Transverse colon (tissue), 4 donors: ENCODE measurements at regions of chr21 and their contacts with region 1.

Region 1: GRCh38 chr21:44454747-44455523 is at the start of gene LRRC3:
- DNase-seq: peak; percentile 90
- H3K4me3 ChIP-seq: peak within 1 kb of the TSS; percentile 86 to 99 (median 88)
- H3K27ac ChIP-seq: peak within 1 kb of the TSS; percentile 61 to 80 (median 78)
- H3K4me1 ChIP-seq: peaks cover 0 to 10% (median 7%) of the 10 kb centered on the region in 4 donors
- H3K27me3 ChIP-seq: peaks cover 8% of the 10 kb centered on the region
- CTCF ChIP-seq: no peak
- EP300 ChIP-seq: no peak
- POLR2A ChIP-seq: no peak
- total RNA-seq, gene LRRC3: 4.4 to 6.7 (median 5.1) TPM

Region 2: GRCh38 chr21:44267655-44268142 is 187.2 kb before region 1 on chr21:
- in situ Hi-C with region 1: loop called in 1 of 4 experiments (anchors 25 kb)
- intact Hi-C with region 1: no loop called
- DNase-seq: peak; percentile 32
- H3K4me3 ChIP-seq: no peak overlapping the region
- H3K27ac ChIP-seq: no peak overlapping the region
- H3K4me1 ChIP-seq: no peaks in the 10 kb centered on the region
- H3K27me3 ChIP-seq: no peaks in the 10 kb centered on the region
- CTCF ChIP-seq: peak in 2 of 5 experiments; percentile 12 to 25
- EP300 ChIP-seq: no peak
- POLR2A ChIP-seq: no peak

Region 3: GRCh38 chr21:44338971-44339910 is 115.7 kb before region 1 on chr21 and contains the start of gene CFAP410:
- in situ Hi-C with region 1: loop called in 1 of 4 experiments (anchors 10 kb)
- intact Hi-C with region 1: loop called (anchors 10 kb)
- DNase-seq: peak; percentile 95
- H3K4me3 ChIP-seq: peak within 1 kb of the TSS; percentile 33 to 66 (median 58)
- H3K27ac ChIP-seq: peak within 1 kb of the TSS; percentile 91 to 97 (median 95)
- H3K4me1 ChIP-seq: peaks cover 6 to 18% (median 14%) of the 10 kb centered on the region in 4 donors
- H3K27me3 ChIP-seq: no peaks in the 10 kb centered on the region
- CTCF ChIP-seq: peak in 1 of 5 experiments; percentile 24
- EP300 ChIP-seq: peak; percentile 35
- POLR2A ChIP-seq: peak; percentile 97
- total RNA-seq, gene CFAP410: 17.2 to 41.3 (median 32.2) TPM

Region 4: GRCh38 chr21:44347911-44348753 is 106.8 kb before region 1 on chr21:
- in situ Hi-C with region 1: loop called in 1 of 4 experiments (anchors 10 kb)
- intact Hi-C with region 1: no loop called
- DNase-seq: no peak
- H3K4me3 ChIP-seq: no peak overlapping the region
- H3K27ac ChIP-seq: no peak overlapping the region
- H3K4me1 ChIP-seq: no peaks in the 10 kb centered on the region
- H3K27me3 ChIP-seq: peaks cover 47% of the 10 kb centered on the region
- CTCF ChIP-seq: no peak
- EP300 ChIP-seq: no peak
- POLR2A ChIP-seq: no peak

Region 5: DNA sequence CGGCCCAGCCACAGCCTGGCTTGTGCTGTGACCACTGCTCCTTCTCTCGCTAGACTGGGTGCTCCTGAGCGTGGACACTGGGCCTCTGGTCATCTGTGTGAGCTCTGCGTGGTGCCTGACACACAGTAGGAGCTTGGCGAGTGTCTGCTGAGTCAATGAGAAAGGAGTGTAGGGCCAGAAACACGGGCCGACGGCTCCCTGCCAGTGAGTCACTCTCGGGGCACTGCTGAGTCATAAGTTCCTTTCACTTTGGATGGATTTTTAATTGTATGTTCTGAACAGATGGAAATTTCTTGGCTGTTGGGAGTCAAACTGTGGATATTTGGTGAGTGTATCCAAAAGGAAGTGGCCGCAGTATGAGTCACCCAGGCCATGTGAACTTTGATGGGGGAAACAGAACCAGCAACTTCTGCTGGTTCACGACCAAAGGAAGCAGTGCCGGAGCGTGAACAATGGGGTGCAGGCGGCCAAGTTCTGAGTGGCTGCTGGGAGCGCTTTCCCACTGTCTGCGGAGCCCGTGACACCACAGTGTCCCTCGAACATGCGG is 909.1 kb after region 1 on chr21:
- in situ Hi-C with region 1: no loop called
- intact Hi-C with region 1: no loop called
- DNase-seq: peak; percentile 66
- H3K4me3 ChIP-seq: no peak overlapping the region
- H3K27ac ChIP-seq: peak overlapping the region; percentile 87 to 90 (median 88)
- H3K4me1 ChIP-seq: peaks cover 4 to 21% (median 7%) of the 10 kb centered on the region in 4 donors
- H3K27me3 ChIP-seq: no peaks in the 10 kb centered on the region
- CTCF ChIP-seq: no peak
- EP300 ChIP-seq: no peak
- POLR2A ChIP-seq: no peak